Transverse colon (tissue), 4 donors: ENCODE measurements at regions of chr15 and their contacts with region 1.

Region 1: DNA sequence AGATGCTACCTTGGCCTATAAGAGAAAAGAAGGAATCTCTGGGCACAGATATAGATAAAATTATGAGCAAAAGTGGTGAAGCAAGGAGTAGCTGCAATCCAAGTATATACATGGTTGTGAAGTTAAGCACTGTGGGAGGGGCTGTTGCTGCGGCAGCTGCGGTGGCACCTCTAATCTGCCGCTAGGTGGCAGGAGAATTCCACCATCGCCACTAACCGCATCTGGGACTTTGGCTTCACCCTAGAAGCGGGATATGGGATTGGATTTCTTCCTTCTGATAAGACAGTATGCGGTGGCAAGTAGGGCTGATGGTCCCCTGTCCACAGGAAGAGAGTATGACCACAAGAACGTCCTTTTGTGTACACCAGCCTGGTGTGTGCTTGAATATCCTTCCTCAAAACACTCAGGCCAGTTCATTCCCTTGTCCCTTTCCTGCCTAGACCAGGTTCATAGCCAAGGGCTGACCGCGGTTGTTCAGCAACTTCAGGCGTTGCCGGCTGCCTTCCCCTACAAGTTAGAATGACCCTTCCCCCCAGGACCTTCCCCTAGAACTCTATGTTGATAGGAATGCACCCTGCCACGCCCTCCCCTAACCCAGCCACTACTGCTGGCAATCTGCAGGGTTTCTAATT is 5.1 kb downstream of the MAGEL2 start:
- DNase-seq: peak; percentile 61
- H3K4me3 ChIP-seq: no peak overlapping the region
- H3K27ac ChIP-seq: no peak overlapping the region
- H3K4me1 ChIP-seq: peaks cover 0 to 5% (median 2%) of the 10 kb centered on the region in 4 donors
- H3K27me3 ChIP-seq: peaks cover 7% of the 10 kb centered on the region
- CTCF ChIP-seq: peak; percentile 71 to 87 (median 79)
- EP300 ChIP-seq: no peak
- POLR2A ChIP-seq: no peak

Region 2: DNA sequence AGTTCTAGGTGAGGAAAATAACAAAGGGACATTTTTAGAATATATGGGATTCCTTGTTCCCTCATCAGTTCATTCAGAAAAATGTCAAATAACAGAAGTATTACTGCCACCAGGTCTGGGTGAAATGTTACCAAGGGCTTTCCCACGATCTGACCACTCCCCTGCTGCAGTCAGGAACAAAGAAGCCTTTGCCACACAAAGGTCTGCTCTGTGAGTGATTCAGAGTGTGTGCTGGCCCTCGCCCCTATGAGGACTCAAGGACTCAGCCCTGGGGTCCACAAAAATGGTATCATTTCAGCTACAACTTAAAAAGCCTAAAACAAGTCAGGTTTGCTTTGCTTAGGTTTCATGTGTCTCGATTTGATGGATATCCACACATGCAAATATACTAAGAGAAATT is 72.0 kb before region 1 on chr15:
- in situ Hi-C with region 1: no loop called
- intact Hi-C with region 1: no loop called
- DNase-seq: no peak
- H3K4me3 ChIP-seq: no peak overlapping the region
- H3K27ac ChIP-seq: peak overlapping the region in 1 of 4 donors; percentile 23
- H3K4me1 ChIP-seq: peaks cover 0 to 11% (median 0%) of the 10 kb centered on the region in 4 donors
- H3K27me3 ChIP-seq: no peaks in the 10 kb centered on the region
- CTCF ChIP-seq: no peak
- EP300 ChIP-seq: no peak
- POLR2A ChIP-seq: no peak

Region 3: GRCh38 chr15:23588268-23588667 is 54.3 kb before region 1 on chr15:
- in situ Hi-C with region 1: no loop called
- intact Hi-C with region 1: no loop called
- DNase-seq: no peak
- H3K4me3 ChIP-seq: no peak overlapping the region
- H3K27ac ChIP-seq: no peak overlapping the region
- H3K4me1 ChIP-seq: no peaks in the 10 kb centered on the region
- H3K27me3 ChIP-seq: no peaks in the 10 kb centered on the region
- CTCF ChIP-seq: no peak
- EP300 ChIP-seq: no peak
- POLR2A ChIP-seq: no peak

Region 4: GRCh38 chr15:23857028-23857641 is 214.6 kb after region 1 on chr15:
- in situ Hi-C with region 1: loop called (anchors 10 to 25 kb)
- intact Hi-C with region 1: no loop called
- DNase-seq: peak; percentile 50
- H3K4me3 ChIP-seq: no peak overlapping the region
- H3K27ac ChIP-seq: no peak overlapping the region
- H3K4me1 ChIP-seq: no peaks in the 10 kb centered on the region
- H3K27me3 ChIP-seq: peaks cover 4% of the 10 kb centered on the region
- CTCF ChIP-seq: peak; percentile 23 to 47 (median 36)
- EP300 ChIP-seq: no peak
- POLR2A ChIP-seq: no peak

Region 5: GRCh38 chr15:23866832-23867231 is 224.3 kb after region 1 on chr15:
- in situ Hi-C with region 1: loop called in 2 of 4 experiments (anchors 10 to 25 kb)
- intact Hi-C with region 1: no loop called
- DNase-seq: no peak
- H3K4me3 ChIP-seq: no peak overlapping the region
- H3K27ac ChIP-seq: no peak overlapping the region
- H3K4me1 ChIP-seq: no peaks in the 10 kb centered on the region
- H3K27me3 ChIP-seq: no peaks in the 10 kb centered on the region
- CTCF ChIP-seq: peak in 3 of 5 experiments; percentile 16 to 30 (median 20)
- EP300 ChIP-seq: no peak
- POLR2A ChIP-seq: no peak

Region 6: GRCh38 chr15:23877502-23878412 is 235.2 kb after region 1 on chr15:
- in situ Hi-C with region 1: loop called in 1 of 4 experiments (anchors 25 kb)
- intact Hi-C with region 1: loop called (anchors 5 kb)
- DNase-seq: peak; percentile 59
- H3K4me3 ChIP-seq: no peak overlapping the region
- H3K27ac ChIP-seq: no peak overlapping the region
- H3K4me1 ChIP-seq: no peaks in the 10 kb centered on the region
- H3K27me3 ChIP-seq: peaks cover 4% of the 10 kb centered on the region
- CTCF ChIP-seq: peak; percentile 47 to 53 (median 49)
- EP300 ChIP-seq: no peak
- POLR2A ChIP-seq: no peak